Activated CD4-positive, alpha-beta memory T cell treated with anti-CD3 and anti-CD28 coated beads, Interleukin-2, amount 10 ng/mL, durations not matched to agents 7 days and 5 days (primary cell): ENCODE measurements at regions of chr13 and their contacts with region 1.

Region 1: GRCh38 chr13:51286135-51287002 is 53.1 kb upstream of the SERPINE3 start:
- DNase-seq: peak; percentile 79
- H3K4me3 Mint-ChIP-seq: no peak overlapping the region
- H3K27ac Mint-ChIP-seq: no peak overlapping the region
- H3K4me1 Mint-ChIP-seq: peaks cover 16% of the 10 kb centered on the region
- H3K27me3 Mint-ChIP-seq: peaks cover 8% of the 10 kb centered on the region

Region 2: GRCh38 chr13:51125498-51126226 is 160.7 kb before region 1 on chr13:
- CTCF ChIA-PET with region 1: interaction called, 172 read pairs
- POLR2A ChIA-PET with region 1: interaction called, 4 read pairs
- DNase-seq: peak; percentile 60
- H3K4me3 Mint-ChIP-seq: no peak overlapping the region
- H3K27ac Mint-ChIP-seq: no peak overlapping the region
- H3K4me1 Mint-ChIP-seq: peaks cover 15% of the 10 kb centered on the region
- H3K27me3 Mint-ChIP-seq: peaks cover 27% of the 10 kb centered on the region

Region 3: GRCh38 chr13:51222037-51222685 is 64.2 kb before region 1 on chr13 and contains the start of gene FAM124A:
- CTCF ChIA-PET with region 1: interaction called, 15 read pairs
- POLR2A ChIA-PET with region 1: no interaction called
- DNase-seq: peak; percentile 49
- H3K4me3 Mint-ChIP-seq: peak within 1 kb of the TSS; percentile 63
- H3K27ac Mint-ChIP-seq: no peak within 1 kb of the TSS
- H3K4me1 Mint-ChIP-seq: peaks cover 5% of the 10 kb centered on the region
- H3K27me3 Mint-ChIP-seq: peaks cover 63% of the 10 kb centered on the region
- total RNA-seq, gene FAM124A: 0.08 to 0.10 TPM

Region 4: GRCh38 chr13:51246418-51247277 is 39.7 kb before region 1 on chr13:
- CTCF ChIA-PET with region 1: interaction called, 10 read pairs
- POLR2A ChIA-PET with region 1: no interaction called
- DNase-seq: no peak
- H3K4me3 Mint-ChIP-seq: no peak overlapping the region
- H3K27ac Mint-ChIP-seq: no peak overlapping the region
- H3K4me1 Mint-ChIP-seq: no peaks in the 10 kb centered on the region
- H3K27me3 Mint-ChIP-seq: peaks cover 18% of the 10 kb centered on the region

Region 5: GRCh38 chr13:51269039-51269438 is 17.3 kb before region 1 on chr13:
- CTCF ChIA-PET with region 1: interaction called, 42 read pairs
- POLR2A ChIA-PET with region 1: no interaction called
- DNase-seq: no peak
- H3K4me3 Mint-ChIP-seq: no peak overlapping the region
- H3K27ac Mint-ChIP-seq: no peak overlapping the region
- H3K4me1 Mint-ChIP-seq: no peaks in the 10 kb centered on the region
- H3K27me3 Mint-ChIP-seq: peaks cover 5% of the 10 kb centered on the region

Region 6: GRCh38 chr13:51308781-51309180 is 22.4 kb after region 1 on chr13:
- CTCF ChIA-PET with region 1: interaction called, 13 read pairs
- POLR2A ChIA-PET with region 1: no interaction called
- DNase-seq: no peak
- H3K4me3 Mint-ChIP-seq: no peak overlapping the region
- H3K27ac Mint-ChIP-seq: no peak overlapping the region
- H3K4me1 Mint-ChIP-seq: no peaks in the 10 kb centered on the region
- H3K27me3 Mint-ChIP-seq: peaks cover 18% of the 10 kb centered on the region

Region 7: DNA sequence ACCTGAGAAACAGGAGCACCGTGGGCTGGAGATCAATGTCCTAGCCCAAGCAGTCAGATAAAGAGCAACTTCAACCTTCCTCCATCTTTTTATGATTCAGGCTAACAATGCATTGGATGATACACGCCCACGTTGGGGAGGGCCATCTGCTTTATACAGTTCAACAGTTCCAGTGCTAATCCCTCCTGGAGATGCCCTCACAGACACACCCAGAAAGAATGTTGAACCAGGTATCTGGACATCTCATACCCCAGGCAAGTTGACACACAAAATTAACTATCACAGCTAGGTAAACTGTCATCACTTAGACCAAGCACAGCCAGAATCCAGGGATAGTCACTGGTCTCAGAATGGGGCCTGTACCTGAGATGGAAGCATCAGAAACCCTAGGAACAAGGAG is 32.5 kb after region 1 on chr13:
- CTCF ChIA-PET with region 1: no interaction called
- POLR2A ChIA-PET with region 1: no interaction called
- DNase-seq: no peak
- H3K4me3 Mint-ChIP-seq: no peak overlapping the region
- H3K27ac Mint-ChIP-seq: no peak overlapping the region
- H3K4me1 Mint-ChIP-seq: no peaks in the 10 kb centered on the region
- H3K27me3 Mint-ChIP-seq: peaks cover 3% of the 10 kb centered on the region